Tibial artery (tissue), 4 donors: ENCODE measurements at regions of chr4 and their contacts with region 1.

Region 1: GRCh38 chr4:185134307-185134869 is 8.7 kb upstream of the SLC25A4 start:
- DNase-seq: no peak
- H3K4me3 ChIP-seq: no peak overlapping the region
- H3K27ac ChIP-seq: no peak overlapping the region
- H3K4me1 ChIP-seq: no peaks in the 10 kb centered on the region
- H3K27me3 ChIP-seq: no peaks in the 10 kb centered on the region
- CTCF ChIP-seq: peak; percentile 70 to 76

Region 2: DNA sequence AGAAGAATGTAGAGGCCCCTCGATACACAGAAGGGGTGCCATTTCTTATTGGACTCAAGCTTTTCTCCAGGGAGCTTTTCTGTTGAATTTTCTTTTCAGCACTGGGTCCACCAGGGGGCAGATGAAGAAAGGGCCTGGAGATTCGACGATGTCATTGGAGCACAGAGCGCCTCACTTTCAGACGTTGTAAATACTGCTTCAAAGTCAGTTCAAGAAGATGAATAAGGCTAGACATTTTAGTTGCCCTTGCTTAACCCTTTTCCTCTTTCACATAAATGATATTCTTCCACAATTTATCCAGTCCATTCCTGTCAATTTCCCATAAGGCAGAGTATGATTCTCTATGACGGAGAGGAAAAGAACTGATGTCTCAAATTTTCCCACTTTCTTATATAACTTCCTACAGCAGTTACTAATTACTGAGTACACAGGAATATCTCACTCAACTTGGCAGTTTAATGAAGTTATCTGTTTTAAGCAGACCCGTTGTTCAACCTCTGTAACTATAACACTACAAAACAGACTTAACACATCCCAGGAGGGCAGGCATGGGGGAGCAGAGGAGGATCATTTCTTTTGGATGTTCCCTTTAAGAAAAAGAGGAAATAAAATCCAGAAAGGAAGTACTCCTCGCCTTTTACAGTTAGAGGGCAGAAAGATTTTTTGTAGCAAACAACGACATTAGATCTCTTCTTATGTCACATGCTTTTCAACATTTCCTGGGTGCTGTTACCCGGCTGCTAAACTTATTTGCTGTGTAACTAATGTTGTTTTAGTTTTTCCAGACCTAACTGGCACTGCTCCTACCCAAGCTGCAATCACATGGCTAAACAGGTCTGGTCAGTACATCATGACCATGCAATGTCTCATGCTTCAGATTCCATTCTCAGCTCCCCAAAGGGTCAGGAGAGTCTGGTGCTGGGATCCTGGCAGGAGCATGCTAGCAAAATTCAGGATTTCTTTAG is 388.3 kb before region 1 on chr4:
- intact Hi-C with region 1: loop called (anchors 10 kb)
- DNase-seq: peak; percentile 80 to 86
- H3K4me3 ChIP-seq: peak overlapping the region; percentile 13 to 25
- H3K27ac ChIP-seq: peak overlapping the region; percentile 75 to 86
- H3K4me1 ChIP-seq: peaks cover 0 to 33% (median 17%) of the 10 kb centered on the region in 4 donors
- H3K27me3 ChIP-seq: no peaks in the 10 kb centered on the region
- CTCF ChIP-seq: peak; percentile 69 to 72

Region 3: DNA sequence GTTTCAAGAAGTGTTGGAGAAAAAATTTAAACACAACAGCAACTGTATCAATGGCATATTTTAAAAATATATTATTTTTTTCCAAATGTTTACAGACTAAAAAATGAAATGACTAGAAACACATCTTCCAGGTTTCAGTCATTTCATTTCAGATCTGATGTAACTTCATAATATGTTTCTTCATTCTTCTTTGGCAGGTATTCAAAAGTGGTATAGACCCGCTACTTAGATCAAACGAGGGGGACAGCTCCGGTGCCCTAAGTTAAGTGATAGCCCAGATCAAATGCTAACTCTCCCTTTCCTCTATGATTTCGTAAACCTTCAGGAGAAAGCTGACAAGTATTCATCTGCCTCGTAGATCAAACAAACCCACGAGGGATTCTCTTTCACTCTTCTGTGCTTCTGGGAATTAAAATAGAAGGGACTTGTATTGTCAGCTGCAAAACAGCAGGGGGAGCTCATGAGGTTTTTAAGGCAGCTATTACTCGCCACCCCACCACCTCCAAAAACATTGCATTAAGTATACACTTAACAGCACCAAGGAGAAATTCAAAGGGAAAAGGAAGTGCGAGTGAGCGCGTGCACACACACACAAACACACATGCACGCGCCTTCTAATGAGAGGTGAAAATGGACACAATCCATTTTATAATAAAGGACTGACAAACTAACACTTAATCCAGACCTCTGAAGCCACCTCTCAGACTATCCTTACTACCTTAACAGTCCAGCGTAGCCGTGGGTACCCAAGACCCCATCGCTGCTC is 94.7 kb before region 1 on chr4:
- intact Hi-C with region 1: loop called (anchors 2 kb)
- DNase-seq: peak in 1 of 2 donors; percentile 41
- H3K4me3 ChIP-seq: no peak overlapping the region
- H3K27ac ChIP-seq: no peak overlapping the region
- H3K4me1 ChIP-seq: no peaks in the 10 kb centered on the region
- H3K27me3 ChIP-seq: no peaks in the 10 kb centered on the region
- CTCF ChIP-seq: peak; percentile 80 to 83

Region 4: DNA sequence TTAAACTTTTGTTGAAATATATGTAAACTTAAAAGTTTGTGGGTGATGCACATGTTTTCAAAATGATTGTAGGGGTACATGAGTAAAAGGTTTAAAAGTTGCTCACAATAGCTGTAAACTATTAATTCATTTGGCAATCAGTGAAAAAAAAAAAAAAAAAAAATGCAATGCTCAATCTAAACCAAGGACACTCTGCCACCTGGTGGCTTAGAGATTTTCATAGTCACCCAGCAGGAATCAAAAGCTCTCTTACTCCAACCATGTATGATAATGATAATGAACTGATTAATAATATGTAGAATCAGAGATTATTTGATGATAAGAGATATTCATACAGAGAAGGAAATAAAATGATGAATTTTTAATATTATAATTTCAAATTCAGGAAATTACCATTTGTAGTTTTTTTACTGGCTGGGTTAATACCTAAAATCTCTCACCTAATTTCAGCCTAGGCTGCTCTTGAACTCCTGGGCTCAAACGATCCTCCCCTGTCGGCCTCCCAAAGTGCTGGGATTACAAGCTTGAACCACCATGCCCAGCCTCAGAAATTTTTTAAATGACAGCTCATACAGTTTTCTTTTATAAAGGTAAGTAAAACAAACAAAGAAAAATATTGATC is 38.2 kb before region 1 on chr4:
- intact Hi-C with region 1: loop called (anchors 1 kb)
- DNase-seq: no peak
- H3K4me3 ChIP-seq: no peak overlapping the region
- H3K27ac ChIP-seq: no peak overlapping the region
- H3K4me1 ChIP-seq: no peaks in the 10 kb centered on the region
- H3K27me3 ChIP-seq: peaks cover 0 to 11% of the 10 kb centered on the region in 2 donors
- CTCF ChIP-seq: peak; percentile 48 to 62

Region 5: GRCh38 chr4:185244763-185245162 is 110.4 kb after region 1 on chr4:
- intact Hi-C with region 1: no loop called
- DNase-seq: no peak
- H3K4me3 ChIP-seq: no peak overlapping the region
- H3K27ac ChIP-seq: no peak overlapping the region
- H3K4me1 ChIP-seq: peaks cover 0 to 34% (median 7%) of the 10 kb centered on the region in 4 donors
- H3K27me3 ChIP-seq: no peaks in the 10 kb centered on the region
- CTCF ChIP-seq: no peak

Region 6: DNA sequence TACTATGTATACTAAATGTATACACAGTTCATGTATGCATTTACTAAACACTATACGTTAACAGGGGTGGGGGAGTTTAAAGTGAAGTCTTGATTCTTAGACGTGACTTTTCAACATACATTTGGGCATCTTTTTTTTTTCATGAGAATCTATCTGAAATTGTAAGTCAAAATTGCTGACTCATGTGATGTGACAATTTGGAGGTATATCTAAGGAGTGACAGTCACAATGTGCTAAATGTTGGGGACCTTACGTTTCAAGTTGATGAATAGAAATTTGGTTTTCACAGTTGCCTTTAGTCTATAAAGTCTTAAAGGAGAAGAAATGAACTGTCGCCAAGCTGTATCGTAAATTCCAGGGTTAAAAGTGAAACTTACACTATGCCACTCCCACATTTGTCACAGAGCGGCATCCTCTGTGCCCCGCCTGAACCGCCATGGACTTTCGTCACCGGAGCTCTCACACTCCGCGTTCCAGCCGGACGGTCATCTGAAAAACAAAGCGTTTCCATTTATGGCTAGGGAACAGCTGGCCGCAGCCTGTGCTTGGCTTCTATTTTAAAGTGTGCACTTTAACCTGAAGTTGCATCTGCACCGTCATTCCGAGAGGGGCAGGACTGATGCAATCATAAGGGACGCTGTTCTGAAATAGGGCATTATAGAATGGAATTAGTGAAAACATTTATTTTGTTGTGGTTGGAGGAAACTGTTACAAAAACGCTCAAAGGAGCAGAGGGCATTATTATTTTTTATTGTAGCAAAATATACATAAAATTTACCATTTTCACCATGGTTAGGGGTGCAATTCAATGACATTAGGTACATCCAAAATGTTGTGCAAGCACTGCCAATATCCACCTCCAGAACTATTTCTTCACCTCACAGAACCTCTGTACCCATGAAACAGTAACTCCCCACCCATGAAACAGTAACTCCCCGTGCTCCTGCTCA is 370.0 kb after region 1 on chr4:
- intact Hi-C with region 1: no loop called
- DNase-seq: peak; percentile 74 to 95
- H3K4me3 ChIP-seq: peak overlapping the region; percentile 8 to 32
- H3K27ac ChIP-seq: peak overlapping the region; percentile 61 to 78
- H3K4me1 ChIP-seq: peaks cover 0 to 36% (median 8%) of the 10 kb centered on the region in 4 donors
- H3K27me3 ChIP-seq: no peaks in the 10 kb centered on the region
- CTCF ChIP-seq: no peak